GM12878 (cell line): ENCODE measurements at regions of chr19 and their contacts with region 1.

Region 1: GRCh38 chr19:14031719-14032480 is at the start of gene IL27RA:
- DNase-seq: peak; percentile 40
- ATAC-seq: peak; percentile 85
- H3K4me3 ChIP-seq: peak within 1 kb of the TSS; percentile 97
- H3K27ac ChIP-seq: peak within 1 kb of the TSS; percentile 91
- H3K4me1 ChIP-seq: peaks cover 17% of the 10 kb centered on the region
- H3K27me3 ChIP-seq: no peaks in the 10 kb centered on the region
- CTCF ChIP-seq: peak; percentile 80 to 92 (median 84)
- EP300 ChIP-seq: 0 out of 4 replicates have a peak, but pooled peaks of 1 of the 2 experiments have one; percentile 9
- POLR2A ChIP-seq: peak; percentile 80
- RAD21 ChIP-seq: peak; percentile 67
- polyA plus RNA-seq, gene IL27RA: 8.4 to 13.1 TPM

Region 2: DNA sequence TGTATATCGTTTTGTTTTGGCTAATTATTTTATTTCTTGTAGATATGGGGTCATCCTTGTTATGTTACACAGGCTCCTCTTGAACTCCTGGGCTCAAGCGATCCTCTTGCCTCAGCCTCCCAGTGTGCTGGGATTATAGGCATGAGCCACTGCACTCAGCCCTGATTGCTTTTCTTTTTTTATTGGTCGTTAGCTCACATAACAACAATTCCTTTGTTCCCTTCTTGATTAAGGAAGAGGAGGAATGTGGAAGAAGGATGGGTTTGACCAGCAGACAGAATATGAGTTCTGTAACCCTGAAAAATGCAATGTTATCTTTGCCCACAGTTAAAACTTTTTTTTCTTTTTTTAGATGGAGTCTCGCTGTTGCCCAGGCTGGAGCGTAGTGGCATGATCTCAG is 137.3 kb before region 1 on chr19:
- CTCF ChIA-PET with region 1: no interaction called
- POLR2A ChIA-PET with region 1: no interaction called
- RAD21 ChIA-PET with region 1: no interaction called
- SMC1A ChIA-PET with region 1: no interaction called
- in situ Hi-C with region 1: no loop called
- intact Hi-C with region 1: no loop called
- DNase-seq: no peak
- ATAC-seq: no peak
- H3K4me3 ChIP-seq: no peak overlapping the region
- H3K27ac ChIP-seq: no peak overlapping the region
- H3K4me1 ChIP-seq: no peaks in the 10 kb centered on the region
- H3K27me3 ChIP-seq: no peaks in the 10 kb centered on the region
- CTCF ChIP-seq: no peak
- EP300 ChIP-seq: no peak
- POLR2A ChIP-seq: no peak
- RAD21 ChIP-seq: no peak

Region 3: DNA sequence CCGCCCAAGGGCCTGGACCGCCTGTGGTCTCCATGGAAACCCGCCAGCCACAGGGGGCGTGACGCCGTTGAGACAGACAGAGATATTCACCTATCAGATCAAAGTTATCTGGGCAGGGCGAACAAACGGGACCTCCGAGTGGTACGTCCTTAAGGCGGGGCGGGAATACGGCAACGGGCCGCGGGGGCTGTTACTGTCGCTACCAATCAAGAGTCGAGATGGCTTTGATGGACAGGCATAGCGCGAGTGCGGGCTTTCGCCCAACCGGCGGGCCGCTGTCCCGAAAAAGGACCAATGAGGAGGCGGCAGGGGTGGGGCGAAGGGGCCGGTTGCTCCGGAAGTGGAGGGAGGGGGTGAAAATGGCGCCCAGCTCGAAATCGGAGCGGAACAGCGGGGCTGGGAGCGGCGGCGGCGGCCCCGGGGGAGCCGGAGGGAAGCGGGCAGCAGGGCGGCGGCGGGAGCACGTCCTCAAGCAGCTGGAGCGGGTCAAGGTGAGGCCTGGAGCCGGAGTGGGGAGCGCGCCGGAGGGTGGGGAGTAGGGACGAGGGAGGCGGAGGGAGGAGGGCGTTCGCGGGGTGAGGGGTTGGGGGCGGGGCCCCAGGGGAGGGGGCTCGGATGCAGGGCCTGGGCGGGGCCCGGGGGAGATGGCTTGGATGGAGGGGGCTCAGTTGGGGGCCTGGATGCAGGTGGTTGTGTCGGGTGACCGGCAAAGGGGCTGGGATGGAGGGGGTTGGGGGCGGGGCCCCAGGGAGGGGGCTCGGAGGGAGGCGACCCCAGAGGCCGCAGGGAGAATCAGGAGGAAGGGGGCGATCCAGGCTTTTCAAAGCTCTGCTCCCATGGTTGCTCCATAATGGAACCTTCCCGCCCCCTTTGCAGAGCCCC is 79.5 kb before region 1 on chr19 and contains the start of gene DCAF15:
- CTCF ChIA-PET with region 1: interaction called, 6 read pairs
- POLR2A ChIA-PET with region 1: interaction called, 3 read pairs
- RAD21 ChIA-PET with region 1: interaction called, 21 read pairs
- SMC1A ChIA-PET with region 1: interaction called, 10 read pairs
- in situ Hi-C with region 1: no loop called
- intact Hi-C with region 1: loop called (anchors 5 kb)
- DNase-seq: peak; percentile 99
- ATAC-seq: peak; percentile 99
- H3K4me3 ChIP-seq: peak within 1 kb of the TSS; percentile 100
- H3K27ac ChIP-seq: peak within 1 kb of the TSS; percentile 82
- H3K4me1 ChIP-seq: peaks cover 11% of the 10 kb centered on the region
- H3K27me3 ChIP-seq: no peaks in the 10 kb centered on the region
- CTCF ChIP-seq: no peak
- EP300 ChIP-seq: no peak
- POLR2A ChIP-seq: peak; percentile 87
- RAD21 ChIP-seq: no peak
- polyA plus RNA-seq, gene DCAF15: 0.16 to 0.58 TPM

Region 4: DNA sequence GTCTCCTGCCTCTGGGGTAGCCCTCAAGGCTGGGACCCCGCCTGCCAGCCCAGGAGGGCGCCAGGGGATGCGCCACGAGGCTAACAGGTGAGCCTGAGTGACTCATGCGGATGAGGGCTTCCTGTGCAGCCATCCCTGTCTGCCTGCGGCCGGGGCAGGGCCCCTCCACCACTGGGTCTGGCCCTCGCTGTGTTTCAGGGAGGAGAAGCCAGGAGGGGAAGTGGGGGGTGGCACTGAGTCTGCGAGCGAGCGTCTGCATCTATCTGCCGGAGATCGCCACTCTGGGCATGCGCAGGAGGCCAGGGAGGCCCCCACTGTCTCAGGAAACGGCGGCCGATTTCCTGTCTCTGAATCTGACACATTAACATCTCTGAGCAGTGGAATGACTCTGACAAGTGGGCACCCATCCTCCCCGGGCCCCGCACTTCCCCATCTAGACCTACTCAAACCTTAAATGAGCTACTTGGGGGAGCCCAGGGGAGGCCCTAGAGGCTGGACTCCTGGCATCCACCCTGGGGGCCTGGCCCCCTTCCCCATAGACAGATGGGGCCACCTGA is 45.5 kb before region 1 on chr19:
- CTCF ChIA-PET with region 1: interaction called, 12 read pairs
- POLR2A ChIA-PET with region 1: interaction called, 23 read pairs
- RAD21 ChIA-PET with region 1: interaction called, 15 read pairs
- SMC1A ChIA-PET with region 1: interaction called, 18 read pairs
- in situ Hi-C with region 1: no loop called
- intact Hi-C with region 1: loop called (anchors 10 kb)
- DNase-seq: peak; percentile 93
- ATAC-seq: peak; percentile 97
- H3K4me3 ChIP-seq: peak overlapping the region; percentile 49; the same call in 1 of the 2 replicates
- H3K27ac ChIP-seq: peak overlapping the region; percentile 94
- H3K4me1 ChIP-seq: peaks cover 27% of the 10 kb centered on the region
- H3K27me3 ChIP-seq: no peaks in the 10 kb centered on the region
- CTCF ChIP-seq: no peak
- EP300 ChIP-seq: 0 out of 4 replicates have a peak, but pooled peaks have one; percentile 27 to 47
- POLR2A ChIP-seq: peak; percentile 86
- RAD21 ChIP-seq: peak; percentile 14; the same call in 1 of the 2 replicates

Region 5: DNA sequence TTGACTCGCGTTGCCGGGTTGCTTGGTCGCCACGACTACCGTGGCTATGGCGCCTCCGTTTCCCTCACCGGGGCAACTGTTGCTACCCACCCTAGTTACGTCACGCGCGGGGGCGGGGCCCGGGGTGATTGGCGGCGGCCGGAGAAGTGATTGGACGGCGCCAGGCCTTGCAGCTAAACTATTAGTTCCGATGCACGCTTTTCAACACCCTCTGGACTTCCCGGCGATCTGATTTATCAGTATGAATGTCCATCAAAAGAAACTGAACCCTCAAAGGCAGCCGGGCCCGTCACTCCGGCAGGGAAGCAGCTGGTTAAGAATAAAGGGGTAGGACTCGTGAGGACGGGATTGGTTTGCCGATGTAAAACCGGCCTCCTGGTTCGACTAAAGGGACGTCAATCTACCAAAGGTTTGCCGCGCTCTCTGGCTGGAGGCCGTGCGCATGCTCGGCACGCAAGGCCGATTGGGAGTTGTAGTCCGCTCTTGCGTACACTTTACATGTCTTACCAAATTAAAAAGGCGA is 25.6 kb before region 1 on chr19 and contains the start of gene RFX1:
- CTCF ChIA-PET with region 1: interaction called, 30 read pairs
- POLR2A ChIA-PET with region 1: interaction called, 17 read pairs
- RAD21 ChIA-PET with region 1: interaction called, 22 read pairs
- SMC1A ChIA-PET with region 1: interaction called, 15 read pairs
- in situ Hi-C with region 1: no loop called
- intact Hi-C with region 1: no loop called
- DNase-seq: peak; percentile 99
- ATAC-seq: peak; percentile 86
- H3K4me3 ChIP-seq: peak within 1 kb of the TSS; percentile 79
- H3K27ac ChIP-seq: peak within 1 kb of the TSS; percentile 95
- H3K4me1 ChIP-seq: peaks cover 41% of the 10 kb centered on the region
- H3K27me3 ChIP-seq: no peaks in the 10 kb centered on the region
- CTCF ChIP-seq: no peak
- EP300 ChIP-seq: peak in 1 of 2 experiments; percentile 79; a peak in 1 of 4 replicates
- POLR2A ChIP-seq: no peak
- RAD21 ChIP-seq: no peak
- polyA plus RNA-seq, gene RFX1: 0.05 to 0.29 TPM

Region 6: DNA sequence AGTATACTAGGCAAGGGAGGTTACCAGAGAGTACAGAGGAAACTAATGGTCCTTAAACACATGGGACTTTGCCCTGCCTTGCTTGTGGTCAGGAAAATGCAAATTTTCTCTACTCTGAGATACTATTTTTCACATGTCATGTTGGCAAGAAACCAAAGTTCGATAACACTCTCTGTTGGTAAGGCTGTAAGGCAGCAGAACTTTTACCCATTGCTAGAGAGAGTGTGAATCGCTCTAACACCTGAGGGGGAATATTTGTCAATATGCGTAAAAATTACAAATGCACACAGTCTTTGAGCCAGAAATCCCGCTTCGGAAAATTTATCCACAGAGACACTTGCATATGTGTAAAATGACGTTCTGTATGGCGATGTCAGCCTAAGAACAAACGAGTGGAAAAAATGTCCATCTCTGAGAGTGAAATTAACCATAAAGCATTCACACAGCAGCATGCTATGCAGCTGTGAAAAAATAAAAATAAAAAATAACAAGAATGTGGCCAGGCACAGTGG is 16.3 kb before region 1 on chr19:
- CTCF ChIA-PET with region 1: interaction called, 21 read pairs
- POLR2A ChIA-PET with region 1: interaction called, 27 read pairs
- RAD21 ChIA-PET with region 1: interaction called, 21 read pairs
- SMC1A ChIA-PET with region 1: interaction called, 33 read pairs
- in situ Hi-C with region 1: no loop called
- intact Hi-C with region 1: no loop called
- DNase-seq: peak; percentile 94
- ATAC-seq: peak; percentile 90
- H3K4me3 ChIP-seq: no peak overlapping the region
- H3K27ac ChIP-seq: peak overlapping the region; percentile 83
- H3K4me1 ChIP-seq: peaks cover 27% of the 10 kb centered on the region
- H3K27me3 ChIP-seq: no peaks in the 10 kb centered on the region
- CTCF ChIP-seq: no peak
- EP300 ChIP-seq: peak in 1 of 2 experiments; percentile 56; a peak in 1 of 4 replicates
- POLR2A ChIP-seq: no peak
- RAD21 ChIP-seq: no peak

Region 7: DNA sequence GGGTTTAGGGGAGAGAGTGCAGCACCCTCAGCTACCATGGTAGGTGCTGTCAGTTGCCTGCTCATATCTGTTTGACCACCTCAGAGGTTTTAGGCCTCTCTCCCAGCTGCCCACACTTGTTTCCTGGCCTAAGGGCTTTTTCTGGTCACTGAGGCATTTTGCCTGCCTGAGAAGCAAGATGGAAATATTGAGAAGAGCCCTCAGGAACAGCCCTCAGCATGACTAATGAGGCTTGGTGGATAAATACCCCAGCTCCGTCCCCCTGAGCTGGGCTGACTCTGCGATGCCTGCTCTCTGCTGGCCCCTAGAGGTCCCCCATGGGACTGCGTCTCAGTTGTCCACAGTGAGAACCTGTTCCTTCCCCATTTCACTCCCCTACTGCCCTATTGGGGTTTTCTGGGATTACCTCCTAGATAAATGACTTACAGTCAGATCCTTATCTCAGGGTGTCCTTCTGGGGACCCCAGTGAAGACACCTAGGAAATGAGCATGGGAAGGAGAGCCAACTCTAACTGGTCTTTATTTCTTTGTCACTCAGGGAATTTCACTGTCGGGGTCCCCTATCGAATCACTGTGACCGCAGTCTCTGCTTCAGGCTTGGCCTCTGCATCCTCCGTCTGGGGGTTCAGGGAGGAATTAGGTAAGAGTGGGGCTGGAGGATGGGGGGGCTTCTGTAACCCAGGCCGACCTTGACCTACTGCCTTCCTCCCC is 16.7 kb after region 1 on chr19:
- CTCF ChIA-PET with region 1: interaction called, 38 read pairs
- POLR2A ChIA-PET with region 1: interaction called, 3 read pairs
- RAD21 ChIA-PET with region 1: interaction called, 20 read pairs
- SMC1A ChIA-PET with region 1: interaction called, 4 read pairs
- in situ Hi-C with region 1: no loop called
- intact Hi-C with region 1: no loop called
- DNase-seq: no peak
- ATAC-seq: peak; percentile 87
- H3K4me3 ChIP-seq: no peak overlapping the region
- H3K27ac ChIP-seq: no peak overlapping the region
- H3K4me1 ChIP-seq: no peaks in the 10 kb centered on the region
- H3K27me3 ChIP-seq: no peaks in the 10 kb centered on the region
- CTCF ChIP-seq: peak; percentile 73 to 95 (median 92)
- EP300 ChIP-seq: no peak
- POLR2A ChIP-seq: no peak
- RAD21 ChIP-seq: peak; percentile 57

Region 8: GRCh38 chr19:14059093-14059480 is 27.2 kb after region 1 on chr19:
- CTCF ChIA-PET with region 1: interaction called, 12 read pairs
- POLR2A ChIA-PET with region 1: interaction called, 3 read pairs
- RAD21 ChIA-PET with region 1: interaction called, 5 read pairs
- SMC1A ChIA-PET with region 1: interaction called, 6 read pairs
- in situ Hi-C with region 1: no loop called
- intact Hi-C with region 1: no loop called
- DNase-seq: no peak
- ATAC-seq: peak; percentile 72
- H3K4me3 ChIP-seq: no peak overlapping the region
- H3K27ac ChIP-seq: no peak overlapping the region
- H3K4me1 ChIP-seq: no peaks in the 10 kb centered on the region
- H3K27me3 ChIP-seq: peaks cover 0 to 6% of the 10 kb centered on the region in 2 experiments
- CTCF ChIP-seq: peak; percentile 63 to 87 (median 75)
- EP300 ChIP-seq: no peak
- POLR2A ChIP-seq: no peak
- RAD21 ChIP-seq: peak; percentile 36; the same call in 1 of the 2 replicates

Region 9: GRCh38 chr19:14167576-14168138 is 135.8 kb after region 1 on chr19:
- CTCF ChIA-PET with region 1: no interaction called
- POLR2A ChIA-PET with region 1: no interaction called
- RAD21 ChIA-PET with region 1: no interaction called
- SMC1A ChIA-PET with region 1: no interaction called
- in situ Hi-C with region 1: no loop called
- intact Hi-C with region 1: no loop called
- DNase-seq: no peak
- ATAC-seq: peak; percentile 75
- H3K4me3 ChIP-seq: no peak overlapping the region
- H3K27ac ChIP-seq: no peak overlapping the region
- H3K4me1 ChIP-seq: peaks cover 8% of the 10 kb centered on the region; the same call in 1 of the 2 replicates
- H3K27me3 ChIP-seq: no peaks in the 10 kb centered on the region
- CTCF ChIP-seq: no peak
- EP300 ChIP-seq: no peak
- POLR2A ChIP-seq: no peak
- RAD21 ChIP-seq: no peak

Region 10: GRCh38 chr19:14214580-14214979 is 182.7 kb after region 1 on chr19:
- CTCF ChIA-PET with region 1: no interaction called
- POLR2A ChIA-PET with region 1: no interaction called
- RAD21 ChIA-PET with region 1: no interaction called
- SMC1A ChIA-PET with region 1: no interaction called
- in situ Hi-C with region 1: no loop called
- intact Hi-C with region 1: no loop called
- DNase-seq: no peak
- ATAC-seq: no peak
- H3K4me3 ChIP-seq: no peak overlapping the region
- H3K27ac ChIP-seq: no peak overlapping the region
- H3K4me1 ChIP-seq: no peaks in the 10 kb centered on the region
- H3K27me3 ChIP-seq: no peaks in the 10 kb centered on the region
- CTCF ChIP-seq: no peak
- EP300 ChIP-seq: no peak
- POLR2A ChIP-seq: no peak
- RAD21 ChIP-seq: no peak